CD14-positive monocyte (primary cell): ENCODE measurements at regions of chr15 and their contacts with region 1.

Region 1: DNA sequence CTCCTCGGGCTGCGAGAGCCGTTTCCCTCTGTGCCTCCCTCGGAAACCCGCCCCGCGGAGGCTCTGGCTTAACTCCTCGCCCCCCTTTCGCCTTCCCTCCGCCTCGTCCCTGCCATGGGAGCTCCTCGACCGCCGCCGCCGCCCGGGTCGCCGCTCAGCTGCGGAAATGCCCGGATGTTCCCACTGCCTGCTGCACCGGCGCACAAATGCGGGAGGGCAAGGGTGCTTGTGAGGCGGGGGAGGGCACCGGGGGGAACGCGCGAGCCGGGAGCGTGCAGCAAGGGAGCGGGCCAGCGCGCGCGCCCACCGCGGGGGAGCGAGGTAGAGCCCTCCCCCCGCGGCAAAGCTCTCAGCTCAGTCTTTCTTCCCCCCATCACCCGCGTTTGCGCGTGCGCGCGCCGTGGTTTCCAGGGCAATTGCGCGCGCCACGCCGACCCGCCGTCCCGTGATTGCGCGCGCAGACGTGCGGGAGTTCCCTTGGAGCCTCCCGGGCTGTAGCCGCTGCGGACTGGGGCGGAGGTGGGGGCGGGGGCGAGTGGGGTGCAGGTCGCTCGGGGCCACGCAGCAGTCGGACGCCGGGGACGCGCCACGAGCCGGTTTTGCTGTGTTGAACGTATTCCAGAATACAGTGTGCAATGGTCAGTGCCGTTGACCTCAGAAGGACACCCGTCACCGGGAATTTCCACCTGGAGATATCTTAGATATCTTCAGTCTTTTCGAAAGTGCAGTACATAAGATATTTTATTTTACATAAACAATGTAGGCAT is at the start of gene DMXL2:
- DNase-seq: peak; percentile 87 to 94 (median 91)
- H3K4me3 ChIP-seq: peak within 1 kb of the TSS; percentile 78 to 99 (median 95)
- H3K4me3 Mint-ChIP-seq: peak within 1 kb of the TSS; percentile 98 to 99
- H3K27ac ChIP-seq: peak within 1 kb of the TSS; percentile 98 to 100
- H3K27ac Mint-ChIP-seq: peak within 1 kb of the TSS; percentile 98 to 100 (median 99)
- H3K4me1 ChIP-seq: peaks cover 54 to 76% of the 10 kb centered on the region in 2 donors
- H3K4me1 Mint-ChIP-seq: peaks cover 56% of the 10 kb centered on the region
- H3K27me3 ChIP-seq: no peaks in the 10 kb centered on the region
- H3K27me3 Mint-ChIP-seq: no peaks in the 10 kb centered on the region
- CTCF ChIP-seq: no peak
- polyA plus RNA-seq, gene DMXL2: 29.1 to 449 (median 45.5) TPM

Region 2: GRCh38 chr15:51585986-51586385 is 36.8 kb before region 1 on chr15:
- intact Hi-C with region 1: loop called (anchors 2 to 5 kb)
- DNase-seq: peak; percentile 87 to 98 (median 95)
- H3K4me3 ChIP-seq: peak overlapping the region in 1 of 3 experiments; percentile 48
- H3K4me3 Mint-ChIP-seq: peak overlapping the region; percentile 42 to 82
- H3K27ac ChIP-seq: peak overlapping the region; percentile 63 to 93
- H3K27ac Mint-ChIP-seq: peak overlapping the region; percentile 97 to 99 (median 99)
- H3K4me1 ChIP-seq: peaks cover 48 to 69% of the 10 kb centered on the region in 2 donors
- H3K4me1 Mint-ChIP-seq: peaks cover 54% of the 10 kb centered on the region
- H3K27me3 ChIP-seq: no peaks in the 10 kb centered on the region
- H3K27me3 Mint-ChIP-seq: peaks cover 0 to 2% (median 0%) of the 10 kb centered on the region in 3 donors
- CTCF ChIP-seq: no peak

Region 3: GRCh38 chr15:51688863-51689262 is 66.1 kb after region 1 on chr15:
- intact Hi-C with region 1: no loop called
- DNase-seq: no peak
- H3K4me3 ChIP-seq: no peak overlapping the region
- H3K4me3 Mint-ChIP-seq: no peak overlapping the region
- H3K27ac ChIP-seq: no peak overlapping the region
- H3K27ac Mint-ChIP-seq: no peak overlapping the region
- H3K4me1 ChIP-seq: peaks cover 12% of the 10 kb centered on the region in 2 donors
- H3K4me1 Mint-ChIP-seq: peaks cover 20% of the 10 kb centered on the region
- H3K27me3 ChIP-seq: peaks cover 13 to 15% of the 10 kb centered on the region in 2 donors
- H3K27me3 Mint-ChIP-seq: peaks cover 6 to 18% (median 17%) of the 10 kb centered on the region in 3 donors
- CTCF ChIP-seq: no peak

Region 4: GRCh38 chr15:51737280-51738017 is 114.7 kb after region 1 on chr15 and contains the start of gene LYSMD2:
- intact Hi-C with region 1: loop called in 1 of 2 experiments (anchors 10 kb)
- DNase-seq: peak; percentile 35 to 53 (median 52)
- H3K4me3 ChIP-seq: peak within 1 kb of the TSS; percentile 78 to 88 (median 78)
- H3K4me3 Mint-ChIP-seq: peak within 1 kb of the TSS; percentile 87 to 95
- H3K27ac ChIP-seq: peak within 1 kb of the TSS; percentile 64 to 73
- H3K27ac Mint-ChIP-seq: peak within 1 kb of the TSS; percentile 64 to 91 (median 86)
- H3K4me1 ChIP-seq: peaks cover 43 to 52% of the 10 kb centered on the region in 2 donors
- H3K4me1 Mint-ChIP-seq: peaks cover 52% of the 10 kb centered on the region
- H3K27me3 ChIP-seq: no peaks in the 10 kb centered on the region
- H3K27me3 Mint-ChIP-seq: peaks cover 0 to 6% (median 2%) of the 10 kb centered on the region in 3 donors
- CTCF ChIP-seq: no peak
- polyA plus RNA-seq, gene LYSMD2: 33.2 to 64.7 (median 50.5) TPM

Region 5: DNA sequence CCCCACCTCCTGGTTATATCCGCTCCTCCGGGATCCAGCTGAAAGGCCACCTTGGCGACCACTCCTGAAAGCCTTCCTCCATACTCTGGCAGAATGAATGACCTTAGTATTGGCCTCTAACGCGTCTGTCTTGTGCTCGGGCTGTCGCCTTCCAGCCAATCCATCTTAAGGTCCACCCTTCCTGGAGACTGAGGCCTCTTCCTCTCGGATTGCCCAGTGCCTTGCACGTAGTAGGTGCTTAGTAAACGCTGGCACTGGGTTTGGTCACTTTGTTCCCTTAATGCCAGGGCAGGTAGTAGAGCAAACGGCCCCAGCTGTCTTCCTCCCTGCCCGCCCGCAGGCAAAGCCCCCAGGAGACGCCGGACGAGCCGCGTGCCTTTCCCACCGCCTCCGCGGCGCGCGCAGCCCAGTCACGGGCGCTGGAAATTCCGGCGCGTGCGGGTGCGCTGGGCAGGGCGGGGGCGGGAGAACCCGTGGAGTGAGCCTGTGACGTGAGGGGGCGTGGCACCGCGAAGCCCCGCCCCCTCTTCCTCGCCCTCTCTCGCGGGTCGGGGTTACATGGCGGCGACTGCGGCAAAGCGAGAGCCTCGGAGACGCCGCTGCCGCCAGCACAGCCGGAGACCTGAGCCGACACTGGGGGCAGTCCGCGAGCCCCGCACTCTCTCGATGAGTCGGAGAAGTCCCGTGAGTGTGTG is 396.1 kb after region 1 on chr15 and contains the start of gene MAPK6:
- intact Hi-C with region 1: loop called in 1 of 2 experiments (anchors 10 kb)
- DNase-seq: peak; percentile 95 to 98 (median 97)
- H3K4me3 ChIP-seq: peak within 1 kb of the TSS; percentile 53 to 98 (median 79)
- H3K4me3 Mint-ChIP-seq: peak within 1 kb of the TSS; percentile 92 to 94
- H3K27ac ChIP-seq: peak within 1 kb of the TSS; percentile 76 to 97
- H3K27ac Mint-ChIP-seq: peak within 1 kb of the TSS; percentile 96 to 100 (median 99)
- H3K4me1 ChIP-seq: peaks cover 45 to 64% of the 10 kb centered on the region in 2 donors
- H3K4me1 Mint-ChIP-seq: peaks cover 56% of the 10 kb centered on the region
- H3K27me3 ChIP-seq: no peaks in the 10 kb centered on the region
- H3K27me3 Mint-ChIP-seq: peaks cover 1 to 8% (median 4%) of the 10 kb centered on the region in 3 donors
- CTCF ChIP-seq: no peak
- polyA plus RNA-seq, gene MAPK6: 8.6 to 11.0 (median 10.2) TPM